ENCODE measurements at regions of chr7 and their contacts with region 1.

Region 1: GRCh38 chr7:51162724-51163329 is 153.8 kb downstream of the COBL start:
- DNase-seq: peak; percentile 61 to 89
- H3K4me3 ChIP-seq: no peak overlapping the region
- H3K27ac ChIP-seq: no peak overlapping the region
- H3K4me1 ChIP-seq: peaks cover 0 to 5% (median 0%) of the 10 kb centered on the region in 4 experiments; a peak in 2 of 7 replicates
- H3K27me3 ChIP-seq: no peaks in the 10 kb centered on the region
- CTCF ChIP-seq: peak in 2 of 3 experiments; percentile 92 to 94; a peak in 3 of 4 replicates
- EP300 ChIP-seq: no peak
- POLR2A ChIP-seq: no peak
- RAD21 ChIP-seq: peak; percentile 85 to 91

Region 2: DNA sequence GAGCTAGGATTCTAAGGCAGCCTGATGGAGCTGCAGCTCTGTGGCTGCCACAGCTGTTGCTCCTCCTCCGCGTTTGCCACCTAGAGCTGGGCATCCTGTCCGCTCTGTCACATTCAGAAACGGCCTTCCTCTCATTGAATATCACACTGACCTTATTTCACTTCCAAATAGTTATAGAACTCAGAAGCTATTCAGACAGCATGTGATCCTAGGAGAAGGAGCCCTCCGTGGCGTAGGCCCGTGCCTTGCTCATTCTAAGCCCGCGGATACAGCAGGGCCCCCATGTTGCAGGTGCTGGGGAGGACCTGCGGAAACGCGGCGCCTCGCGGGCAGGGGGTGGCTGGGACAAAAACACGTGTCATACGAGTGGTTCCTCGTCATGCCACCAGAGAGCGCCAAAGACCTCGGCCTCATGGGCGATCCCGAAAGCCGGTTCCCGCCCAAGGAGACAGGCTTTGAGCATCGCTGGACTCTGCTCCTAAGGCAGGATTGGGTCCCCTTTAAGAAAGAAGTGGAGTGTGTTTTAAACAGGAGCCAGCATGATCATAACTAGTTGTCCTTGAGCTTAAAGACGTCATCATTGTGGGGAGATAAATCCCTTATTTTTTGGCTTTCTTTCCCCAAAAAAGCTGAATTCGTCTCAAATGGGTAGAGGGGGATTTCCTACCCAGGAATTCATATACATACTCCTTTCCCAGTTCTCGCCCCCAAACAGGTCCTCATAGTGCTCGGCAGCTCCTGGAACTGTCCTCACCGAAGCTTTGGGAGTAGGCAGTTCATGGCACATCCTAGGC is 694.8 kb before region 1 on chr7:
- CTCF ChIA-PET with region 1: interaction called, 11 read pairs
- POLR2A ChIA-PET with region 1: no interaction called
- DNase-seq: peak; percentile 36 to 92
- H3K4me3 ChIP-seq: no peak overlapping the region
- H3K27ac ChIP-seq: no peak overlapping the region
- H3K4me1 ChIP-seq: no peaks in the 10 kb centered on the region; a peak in 1 of 7 replicates
- H3K27me3 ChIP-seq: peaks cover 0 to 14% (median 9%) of the 10 kb centered on the region in 4 experiments; a peak in 6 of 7 replicates
- CTCF ChIP-seq: peak; percentile 84 to 87 (median 87)
- EP300 ChIP-seq: no peak
- POLR2A ChIP-seq: no peak
- RAD21 ChIP-seq: peak; percentile 95 to 96

Region 3: DNA sequence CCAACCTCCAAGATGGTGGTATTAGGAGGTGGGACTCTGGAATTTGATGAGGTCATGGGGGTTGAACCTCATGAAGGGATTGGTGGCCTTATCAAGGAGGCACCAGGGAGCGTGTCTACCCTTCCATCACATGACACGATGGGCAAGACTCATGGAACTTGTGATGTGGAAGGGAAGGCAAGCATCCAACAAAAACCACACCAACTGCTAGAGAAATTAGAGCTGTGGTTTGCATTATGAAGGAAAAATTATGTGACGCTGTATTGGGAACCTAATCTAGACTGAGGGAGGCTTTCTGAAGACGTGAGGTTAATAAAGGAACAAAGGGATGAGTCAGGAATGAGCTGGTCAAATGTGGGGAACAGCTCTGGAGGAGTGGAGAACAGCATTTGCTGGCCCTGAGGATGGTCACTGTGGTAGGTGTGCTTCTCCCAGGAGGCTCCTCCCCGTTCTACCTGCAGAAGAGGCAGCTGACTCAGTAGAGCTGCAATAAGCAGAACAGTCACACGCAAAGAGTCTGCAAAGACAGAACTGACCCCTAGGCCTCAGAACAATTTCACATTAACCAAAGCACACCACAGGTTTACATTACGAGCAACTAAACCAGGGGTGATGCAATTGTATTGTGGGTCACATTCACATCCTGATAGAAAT is 143.5 kb before region 1 on chr7:
- CTCF ChIA-PET with region 1: interaction called, 11 read pairs
- POLR2A ChIA-PET with region 1: no interaction called
- DNase-seq: peak in 1 of 2 experiments; percentile 29
- H3K4me3 ChIP-seq: no peak overlapping the region
- H3K27ac ChIP-seq: no peak overlapping the region
- H3K4me1 ChIP-seq: no peaks in the 10 kb centered on the region; a peak in 1 of 7 replicates
- H3K27me3 ChIP-seq: no peaks in the 10 kb centered on the region
- CTCF ChIP-seq: no peak
- EP300 ChIP-seq: no peak
- POLR2A ChIP-seq: no peak; a peak in 1 of 3 replicates
- RAD21 ChIP-seq: no peak

Region 4: GRCh38 chr7:51067757-51068156 is 95.1 kb before region 1 on chr7:
- CTCF ChIA-PET with region 1: interaction called, 23 read pairs
- POLR2A ChIA-PET with region 1: interaction called, 5 read pairs
- DNase-seq: peak in 1 of 2 experiments; percentile 84
- H3K4me3 ChIP-seq: no peak overlapping the region
- H3K27ac ChIP-seq: no peak overlapping the region
- H3K4me1 ChIP-seq: peaks cover 0 to 3% (median under 1%) of the 10 kb centered on the region in 4 experiments; a peak in 3 of 7 replicates
- H3K27me3 ChIP-seq: no peaks in the 10 kb centered on the region
- CTCF ChIP-seq: peak in 2 of 3 experiments; percentile 66 to 77; a peak in 3 of 4 replicates
- EP300 ChIP-seq: no peak
- POLR2A ChIP-seq: no peak
- RAD21 ChIP-seq: peak; percentile 63 to 70

Region 5: DNA sequence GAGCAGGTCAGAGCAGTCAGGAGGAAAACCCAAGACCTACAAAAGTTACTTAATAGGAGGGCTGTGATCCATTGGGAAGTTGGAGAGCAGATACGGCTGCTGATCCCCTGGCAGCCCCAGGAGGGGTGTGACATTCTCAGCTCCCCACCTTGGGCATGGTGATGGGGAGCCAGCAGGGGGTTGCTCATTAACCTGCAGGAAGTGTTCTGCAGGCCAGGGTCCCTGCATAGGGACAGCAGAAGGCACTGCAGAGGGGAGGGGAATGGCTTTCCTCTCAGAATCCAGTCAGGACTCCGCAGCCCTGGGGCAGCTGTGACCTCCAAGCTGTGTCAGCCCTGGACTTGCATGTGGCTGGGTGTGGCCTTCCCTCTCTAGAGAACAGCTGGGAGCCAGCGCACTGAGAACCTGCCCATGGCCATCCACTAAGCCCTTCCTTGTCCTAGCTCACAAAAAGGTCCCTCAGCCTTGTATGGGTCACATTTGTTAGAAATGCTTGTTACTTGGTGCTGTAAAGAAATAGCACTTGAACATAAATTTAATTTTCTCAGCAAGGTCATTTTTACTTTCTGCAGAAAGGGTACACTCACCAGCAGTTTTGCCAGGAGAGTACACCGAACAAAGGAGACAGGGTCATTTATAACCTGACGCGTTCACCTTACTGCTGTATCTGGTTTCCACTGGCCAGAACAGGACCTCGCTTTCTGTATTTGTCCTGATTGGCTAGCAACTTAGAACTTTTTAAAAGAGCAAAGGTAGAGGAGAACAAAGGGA is 15.8 kb before region 1 on chr7:
- CTCF ChIA-PET with region 1: interaction called, 68 read pairs
- POLR2A ChIA-PET with region 1: no interaction called
- DNase-seq: peak in 1 of 2 experiments; percentile 43
- H3K4me3 ChIP-seq: no peak overlapping the region
- H3K27ac ChIP-seq: 0 out of 2 replicates have a peak overlapping the region, but pooled peaks have one; percentile 8
- H3K4me1 ChIP-seq: peaks cover 3 to 10% (median 4%) of the 10 kb centered on the region in 4 experiments
- H3K27me3 ChIP-seq: no peaks in the 10 kb centered on the region
- CTCF ChIP-seq: no peak
- EP300 ChIP-seq: no peak
- POLR2A ChIP-seq: peak in 1 of 2 experiments; percentile 50; a peak in 2 of 3 replicates
- RAD21 ChIP-seq: no peak

Region 6: GRCh38 chr7:51187941-51188340 is 25.1 kb after region 1 on chr7:
- CTCF ChIA-PET with region 1: interaction called, 19 read pairs
- POLR2A ChIA-PET with region 1: no interaction called
- DNase-seq: peak; percentile 50 to 82
- H3K4me3 ChIP-seq: no peak overlapping the region
- H3K27ac ChIP-seq: no peak overlapping the region
- H3K4me1 ChIP-seq: peaks cover 0 to 7% (median 4%) of the 10 kb centered on the region in 4 experiments; a peak in 4 of 7 replicates
- H3K27me3 ChIP-seq: no peaks in the 10 kb centered on the region
- CTCF ChIP-seq: peak; percentile 86 to 97 (median 90)
- EP300 ChIP-seq: no peak
- POLR2A ChIP-seq: no peak
- RAD21 ChIP-seq: peak; percentile 95

Region 7: GRCh38 chr7:51198654-51199053 is 35.8 kb after region 1 on chr7:
- CTCF ChIA-PET with region 1: no interaction called
- POLR2A ChIA-PET with region 1: no interaction called
- DNase-seq: no peak
- H3K4me3 ChIP-seq: no peak overlapping the region
- H3K27ac ChIP-seq: no peak overlapping the region
- H3K4me1 ChIP-seq: no peaks in the 10 kb centered on the region
- H3K27me3 ChIP-seq: no peaks in the 10 kb centered on the region
- CTCF ChIP-seq: no peak
- EP300 ChIP-seq: no peak
- POLR2A ChIP-seq: no peak
- RAD21 ChIP-seq: no peak

Region 8: DNA sequence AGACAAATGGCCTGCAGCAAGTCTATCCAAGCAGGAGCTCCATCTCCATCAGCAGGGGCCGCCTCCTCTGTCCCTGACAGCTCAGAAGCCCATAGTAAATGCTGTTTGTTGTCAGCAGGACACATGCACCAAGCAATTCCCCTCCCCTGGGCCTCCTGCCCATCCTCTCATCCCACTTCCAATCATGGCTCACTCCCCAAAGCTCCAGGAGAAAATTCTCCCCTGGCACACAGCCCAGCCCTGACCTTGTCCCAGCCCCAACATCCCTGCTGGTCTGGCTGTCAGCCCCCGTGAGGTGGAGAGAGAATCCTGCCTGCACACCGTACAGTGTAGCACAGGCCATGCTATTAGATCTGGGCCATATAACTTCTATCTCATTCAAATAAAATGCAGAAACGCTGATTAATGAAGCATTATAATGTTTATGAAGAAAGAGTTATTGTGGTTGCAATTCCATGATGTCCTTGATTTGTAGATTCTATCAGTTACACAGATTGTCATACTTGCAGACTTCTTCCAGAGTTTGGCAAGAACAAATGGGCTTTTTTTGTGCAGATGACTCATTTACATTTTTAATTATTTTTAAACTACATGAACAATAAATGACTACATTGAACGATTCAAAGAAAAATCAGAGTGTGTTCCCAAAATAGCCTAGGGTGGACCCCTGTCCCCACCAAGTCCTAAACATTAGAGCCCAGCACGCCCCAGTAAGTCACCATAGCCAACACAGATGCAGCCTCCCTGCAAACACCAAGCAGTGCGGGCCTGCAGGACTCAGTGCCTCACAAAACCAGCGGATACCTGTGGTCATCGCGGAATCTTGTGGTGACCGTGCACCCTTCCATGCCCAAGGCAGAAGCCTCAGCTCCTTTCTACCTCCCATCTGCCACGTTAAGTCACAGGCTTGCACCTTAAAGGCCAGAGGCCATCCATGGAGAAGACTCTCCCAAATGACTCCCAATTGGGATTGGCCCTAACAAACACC is 83.7 kb after region 1 on chr7:
- CTCF ChIA-PET with region 1: no interaction called
- POLR2A ChIA-PET with region 1: no interaction called
- DNase-seq: no peak
- H3K4me3 ChIP-seq: no peak overlapping the region
- H3K27ac ChIP-seq: no peak overlapping the region
- H3K4me1 ChIP-seq: peaks cover 0 to 8% (median 0%) of the 10 kb centered on the region in 4 experiments; a peak in 2 of 7 replicates
- H3K27me3 ChIP-seq: no peaks in the 10 kb centered on the region
- CTCF ChIP-seq: no peak
- EP300 ChIP-seq: no peak
- POLR2A ChIP-seq: no peak
- RAD21 ChIP-seq: no peak

Region 9: DNA sequence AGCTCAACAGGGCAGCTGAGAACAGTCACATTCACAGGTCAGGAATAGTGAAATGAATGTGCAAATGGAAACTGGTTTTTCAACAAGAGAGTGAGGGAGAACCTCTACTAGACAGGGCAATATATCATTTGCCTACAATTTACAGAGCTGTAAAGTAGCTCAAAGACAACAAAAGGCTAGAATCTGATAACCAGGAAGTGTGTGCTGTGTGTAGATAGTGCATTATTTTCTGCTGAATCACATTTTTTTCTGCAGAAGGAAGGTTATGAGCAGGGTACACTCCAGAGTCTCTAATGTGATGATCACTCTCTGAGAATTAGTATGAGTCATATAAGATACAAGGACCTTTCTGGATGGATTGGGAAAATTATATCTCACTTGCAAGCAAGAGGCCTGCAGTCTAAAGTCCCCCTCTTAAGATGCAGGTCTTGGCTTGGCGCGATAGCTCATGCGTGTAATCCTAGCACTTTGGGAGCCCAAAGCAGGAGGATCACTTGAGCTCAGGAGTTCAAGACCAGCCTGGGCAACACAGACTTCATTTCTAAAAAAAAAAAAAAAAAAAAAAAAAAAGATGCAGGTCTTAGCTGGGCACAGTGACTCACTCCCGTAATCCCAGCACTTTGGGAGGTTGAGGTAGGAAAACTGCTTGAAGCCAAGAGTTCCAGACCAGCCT is 213.7 kb after region 1 on chr7:
- CTCF ChIA-PET with region 1: interaction called, 155 read pairs
- POLR2A ChIA-PET with region 1: no interaction called
- DNase-seq: no peak
- H3K4me3 ChIP-seq: no peak overlapping the region
- H3K27ac ChIP-seq: no peak overlapping the region
- H3K4me1 ChIP-seq: no peaks in the 10 kb centered on the region
- H3K27me3 ChIP-seq: no peaks in the 10 kb centered on the region
- CTCF ChIP-seq: no peak
- EP300 ChIP-seq: no peak
- POLR2A ChIP-seq: no peak
- RAD21 ChIP-seq: no peak